Heart right ventricle (tissue), 16 donors: ENCODE measurements at regions of chr9 and their contacts with region 1.

Region 1: DNA sequence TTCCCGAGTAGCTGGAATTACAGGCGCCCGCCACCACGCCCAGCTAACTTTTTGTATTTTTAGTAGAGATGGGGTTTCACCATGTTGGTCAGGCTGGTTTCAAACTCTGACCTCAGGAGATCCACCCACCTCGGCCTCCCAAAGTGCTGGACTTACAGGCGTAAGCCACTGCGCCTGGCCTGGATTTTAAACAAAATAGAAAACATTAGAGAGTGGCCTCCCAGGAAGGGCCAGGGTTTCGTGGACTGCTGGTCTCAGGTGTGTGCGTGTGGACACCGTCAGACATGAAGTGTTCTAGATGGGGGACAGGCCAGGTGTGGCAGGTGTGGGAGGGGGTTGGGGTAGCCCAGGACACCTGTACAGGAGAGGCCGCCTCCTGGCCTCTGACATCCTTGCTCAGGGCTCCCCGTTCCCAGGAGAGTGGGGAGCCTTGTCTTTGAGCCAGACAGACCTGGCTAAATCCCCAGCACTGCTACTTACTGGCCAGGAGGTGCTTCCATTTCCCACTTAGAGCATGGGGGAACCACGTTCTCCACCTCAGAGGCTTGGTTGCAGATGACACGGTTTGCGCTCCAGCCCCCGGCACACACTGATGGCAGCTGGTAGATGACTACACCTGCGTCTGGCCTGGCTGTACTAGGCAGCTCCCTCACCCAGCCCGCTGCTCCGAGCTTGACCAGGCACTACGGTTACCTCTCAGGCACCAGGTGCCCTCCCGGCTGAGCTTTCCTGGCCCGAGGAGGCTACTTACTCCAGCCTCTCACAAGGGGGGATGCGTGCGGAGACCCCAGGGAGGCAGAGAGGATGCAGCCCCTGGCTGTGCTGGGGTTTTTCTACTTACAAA is 7.2 kb upstream of the GBGT1 start:
- DNase-seq: no peak
- ATAC-seq: peak in 1 of 8 donors; percentile 25
- H3K4me3 ChIP-seq: no peak overlapping the region
- H3K27ac ChIP-seq: no peak overlapping the region
- H3K4me1 ChIP-seq: no peaks in the 10 kb centered on the region
- H3K27me3 ChIP-seq: peaks cover 0 to 11% (median 6%) of the 10 kb centered on the region in 7 donors
- CTCF ChIP-seq: no peak

Region 2: GRCh38 chr9:132498531-132499210 is 672.3 kb before region 1 on chr9:
- intact Hi-C with region 1: no loop called
- DNase-seq: no peak
- ATAC-seq: no peak
- H3K4me3 ChIP-seq: no peak overlapping the region
- H3K27ac ChIP-seq: no peak overlapping the region
- H3K4me1 ChIP-seq: no peaks in the 10 kb centered on the region
- H3K27me3 ChIP-seq: peaks cover 0 to 18% (median 15%) of the 10 kb centered on the region in 7 donors
- CTCF ChIP-seq: no peak

Region 3: DNA sequence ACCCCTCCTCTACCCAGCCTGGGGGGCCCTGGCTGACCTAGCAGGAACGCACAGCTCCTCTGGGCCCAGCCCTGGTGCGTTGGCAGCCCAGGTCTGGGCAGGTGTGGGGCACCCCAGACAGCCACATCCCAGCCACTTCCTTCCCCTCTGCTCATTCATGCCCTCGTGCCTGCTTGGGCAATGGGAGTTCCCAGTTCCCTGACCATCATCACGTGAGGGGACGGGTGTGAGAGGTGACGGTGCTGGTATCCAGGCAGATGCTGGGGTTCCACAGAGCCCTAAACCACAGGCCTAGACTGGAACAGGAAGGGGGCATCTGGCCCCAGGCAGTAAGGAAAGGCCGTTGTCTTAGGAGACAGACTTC is 58.3 kb before region 1 on chr9:
- intact Hi-C with region 1: no loop called
- DNase-seq: peak; percentile 34 to 59
- ATAC-seq: peak in 6 of 8 donors; percentile 6 to 31 (median 18)
- H3K4me3 ChIP-seq: no peak overlapping the region
- H3K27ac ChIP-seq: peak overlapping the region in 9 of 10 donors; percentile 73 to 96 (median 82)
- H3K4me1 ChIP-seq: peaks cover 50 to 64% (median 57%) of the 10 kb centered on the region in 9 donors
- H3K27me3 ChIP-seq: no peaks in the 10 kb centered on the region
- CTCF ChIP-seq: no peak

Region 4: DNA sequence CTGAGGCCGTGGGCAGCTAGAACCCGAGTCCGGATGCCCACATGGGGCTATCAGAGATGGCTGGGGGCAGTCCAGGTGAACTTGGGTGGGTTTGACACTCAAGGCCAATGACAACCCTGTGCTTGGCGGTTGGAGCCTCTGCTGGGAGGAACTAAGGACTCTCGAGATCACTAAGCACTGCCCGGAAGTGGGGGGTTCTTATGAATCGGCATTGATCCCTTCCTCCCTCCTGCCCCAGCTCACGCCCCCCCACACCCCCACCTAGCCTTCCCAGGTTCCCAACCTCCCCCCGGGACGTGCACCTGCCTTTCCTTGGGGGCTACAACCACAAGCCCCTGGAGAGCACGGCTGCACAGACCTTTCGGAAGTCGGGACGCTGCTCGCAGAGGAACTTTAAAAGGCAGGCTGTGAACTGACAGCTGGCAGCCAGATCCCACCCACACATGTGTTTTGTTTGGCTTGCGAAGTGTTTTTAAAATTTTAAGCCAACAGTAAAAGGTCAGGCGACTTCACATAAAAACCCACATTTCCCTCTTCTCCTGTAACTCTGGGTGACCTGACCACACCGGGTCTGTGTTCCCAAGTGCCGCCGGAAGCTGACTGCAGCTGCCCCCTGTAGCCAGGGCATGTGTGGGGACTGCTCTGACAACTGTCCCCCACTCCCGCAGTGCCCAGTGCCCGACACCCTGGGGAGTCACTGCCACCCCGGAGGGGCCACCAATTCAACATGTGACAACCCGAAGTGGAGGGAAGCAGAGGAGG is 44.8 kb before region 1 on chr9:
- intact Hi-C with region 1: no loop called
- DNase-seq: peak; percentile 47 to 67
- ATAC-seq: peak in 7 of 8 donors; percentile 5 to 49 (median 21)
- H3K4me3 ChIP-seq: peak overlapping the region in 9 of 10 donors; percentile 1 to 32 (median 23)
- H3K27ac ChIP-seq: peak overlapping the region; percentile 29 to 93 (median 65)
- H3K4me1 ChIP-seq: peaks cover 38 to 80% (median 68%) of the 10 kb centered on the region in 9 donors
- H3K27me3 ChIP-seq: no peaks in the 10 kb centered on the region
- CTCF ChIP-seq: no peak

Region 5: DNA sequence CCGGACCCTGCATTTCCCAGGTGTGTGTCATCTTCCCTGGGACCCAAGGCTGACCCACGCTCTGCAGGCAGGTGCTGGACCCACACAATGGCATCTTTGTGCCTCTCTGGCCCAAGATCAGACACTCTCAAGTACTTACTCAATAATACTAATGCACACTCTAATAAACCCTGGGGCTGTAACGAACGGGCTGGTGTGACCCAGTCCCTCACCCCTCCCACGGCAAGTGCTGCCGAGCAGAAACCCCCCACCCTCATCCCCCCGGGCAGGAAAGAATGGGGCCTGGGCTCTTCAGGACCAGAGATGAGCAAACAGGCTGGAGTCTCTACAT is 39.2 kb after region 1 on chr9:
- intact Hi-C with region 1: loop called in 1 of 10 experiments (anchors 1 kb)
- DNase-seq: no peak
- ATAC-seq: no peak
- H3K4me3 ChIP-seq: no peak overlapping the region
- H3K27ac ChIP-seq: no peak overlapping the region
- H3K4me1 ChIP-seq: no peaks in the 10 kb centered on the region
- H3K27me3 ChIP-seq: peaks cover 0 to 17% (median 0%) of the 10 kb centered on the region in 7 donors
- CTCF ChIP-seq: no peak

Region 6: DNA sequence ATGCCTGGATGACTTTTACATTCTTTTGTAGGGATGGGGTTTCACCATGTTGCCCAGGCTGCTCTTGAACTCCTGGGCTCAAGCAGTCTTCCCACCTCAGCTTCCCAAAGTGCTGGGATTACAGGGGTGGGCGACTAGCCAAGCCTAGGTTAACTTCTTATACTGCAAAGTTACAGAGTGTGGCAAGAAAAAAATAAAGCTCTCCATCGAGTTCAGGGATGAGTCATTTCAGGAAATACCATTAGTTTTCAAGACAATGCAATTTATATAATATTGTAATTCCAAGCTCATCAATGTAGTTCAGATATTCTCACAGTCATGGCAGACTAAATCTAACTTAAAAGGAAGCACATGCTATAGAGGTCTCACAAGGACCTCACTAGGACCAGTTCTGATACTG is 115.6 kb after region 1 on chr9:
- intact Hi-C with region 1: no loop called
- DNase-seq: no peak
- ATAC-seq: no peak
- H3K4me3 ChIP-seq: no peak overlapping the region
- H3K27ac ChIP-seq: no peak overlapping the region
- H3K4me1 ChIP-seq: peaks cover 0 to 7% (median 0%) of the 10 kb centered on the region in 9 donors
- H3K27me3 ChIP-seq: peaks cover 0 to 14% (median 0%) of the 10 kb centered on the region in 7 donors
- CTCF ChIP-seq: no peak